ENCODE measurements at regions of chr14 and their contacts with region 1.

Region 1: GRCh38 chr14:72104011-72104613 is 171.9 kb downstream of the RGS6 start:
- DNase-seq: peak; percentile 62
- H3K4me3 Mint-ChIP-seq: no peak overlapping the region
- H3K27ac Mint-ChIP-seq: no peak overlapping the region
- H3K4me1 Mint-ChIP-seq: no peaks in the 10 kb centered on the region
- H3K27me3 Mint-ChIP-seq: peaks cover 15% of the 10 kb centered on the region

Region 2: GRCh38 chr14:71815110-71815509 is 289.0 kb before region 1 on chr14:
- CTCF ChIA-PET with region 1: no interaction called
- POLR2A ChIA-PET with region 1: no interaction called
- intact Hi-C with region 1: no loop called
- DNase-seq: no peak
- H3K4me3 Mint-ChIP-seq: no peak overlapping the region
- H3K27ac Mint-ChIP-seq: no peak overlapping the region
- H3K4me1 Mint-ChIP-seq: no peaks in the 10 kb centered on the region
- H3K27me3 Mint-ChIP-seq: peaks cover 3% of the 10 kb centered on the region

Region 3: GRCh38 chr14:72089625-72090024 is 14.5 kb before region 1 on chr14:
- CTCF ChIA-PET with region 1: interaction called, 10 read pairs
- POLR2A ChIA-PET with region 1: no interaction called
- intact Hi-C with region 1: no loop called
- DNase-seq: no peak
- H3K4me3 Mint-ChIP-seq: no peak overlapping the region
- H3K27ac Mint-ChIP-seq: no peak overlapping the region
- H3K4me1 Mint-ChIP-seq: no peaks in the 10 kb centered on the region
- H3K27me3 Mint-ChIP-seq: peaks cover 14% of the 10 kb centered on the region

Region 4: DNA sequence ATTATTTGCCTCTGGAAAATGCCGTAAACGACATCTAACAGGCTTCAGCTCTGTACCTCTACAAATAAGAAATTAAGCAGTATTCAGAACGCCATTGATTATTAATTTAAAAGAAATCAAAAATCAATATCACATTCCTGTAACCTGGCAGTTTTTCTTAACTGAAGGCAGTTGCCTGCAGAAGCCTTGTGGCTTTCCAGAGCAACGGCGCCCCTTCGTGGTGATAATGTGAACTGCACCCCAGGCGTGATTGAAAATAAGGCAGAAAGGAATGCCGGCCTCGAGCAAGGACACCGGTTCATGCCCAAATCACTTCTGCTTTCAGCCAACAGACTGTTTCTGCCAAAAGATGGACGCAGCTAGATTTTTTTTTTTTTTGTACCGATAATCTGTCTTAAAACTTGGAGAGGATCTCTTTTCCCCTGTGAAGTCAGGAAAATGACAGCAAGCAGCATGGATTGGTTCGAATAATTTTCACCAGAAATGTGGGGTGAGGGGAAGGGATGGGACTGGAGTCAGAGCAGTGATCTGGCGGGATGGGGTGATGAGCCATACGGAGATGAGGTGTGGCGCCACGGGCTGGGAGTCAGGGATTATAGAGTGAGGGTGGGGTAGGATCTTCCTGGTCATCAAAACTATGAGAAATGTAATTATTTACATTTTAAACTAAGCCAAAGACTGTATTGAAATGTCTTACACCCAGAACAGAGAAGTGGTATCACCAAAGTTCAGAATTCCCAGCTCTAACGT is 316.8 kb after region 1 on chr14:
- CTCF ChIA-PET with region 1: interaction called, 12 read pairs
- POLR2A ChIA-PET with region 1: no interaction called
- intact Hi-C with region 1: no loop called
- DNase-seq: peak; percentile 86
- H3K4me3 Mint-ChIP-seq: no peak overlapping the region
- H3K27ac Mint-ChIP-seq: no peak overlapping the region
- H3K4me1 Mint-ChIP-seq: peaks cover 4% of the 10 kb centered on the region
- H3K27me3 Mint-ChIP-seq: peaks cover 9% of the 10 kb centered on the region